H1 (cell line): ENCODE measurements at regions of chr6 and their contacts with region 1.

Region 1: GRCh38 chr6:53171605-53172446 is 23.2 kb upstream of the GCM1 start:
- DNase-seq: peak; percentile 57 to 98
- H3K4me3 ChIP-seq: no peak overlapping the region
- H3K27ac ChIP-seq: no peak overlapping the region
- H3K4me1 ChIP-seq: no peaks in the 10 kb centered on the region
- H3K27me3 ChIP-seq: no peaks in the 10 kb centered on the region
- CTCF ChIP-seq: peak; percentile 100
- EP300 ChIP-seq: no peak; a peak in 1 of 3 replicates
- POLR2A ChIP-seq: no peak
- RAD21 ChIP-seq: peak; percentile 100

Region 2: DNA sequence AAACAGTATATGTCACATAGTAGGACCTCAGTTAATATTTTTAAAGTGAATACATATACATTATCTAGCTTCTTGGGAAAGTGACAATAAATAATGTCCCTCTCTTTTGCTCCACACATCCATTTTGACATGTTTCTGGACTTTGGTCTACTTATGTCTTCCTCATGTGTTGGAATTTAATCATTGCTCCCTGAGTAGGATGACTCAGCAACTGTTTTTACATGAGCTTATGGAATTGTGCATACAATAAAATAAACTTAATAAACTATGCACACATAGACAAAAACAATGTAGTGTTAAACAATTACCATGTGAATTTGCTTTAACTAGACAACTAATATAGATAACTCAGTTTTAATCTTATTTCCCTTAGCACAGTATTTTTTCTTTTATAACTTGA is 1849.3 kb before region 1 on chr6:
- CTCF ChIA-PET with region 1: no interaction called
- POLR2A ChIA-PET with region 1: no interaction called
- DNase-seq: no peak
- H3K4me3 ChIP-seq: no peak overlapping the region
- H3K27ac ChIP-seq: no peak overlapping the region
- H3K4me1 ChIP-seq: 0 out of 7 replicates have a peak, but pooled peaks cover 0 to 2% (median 0%) of the 10 kb centered on the region in 4 experiments
- H3K27me3 ChIP-seq: no peaks in the 10 kb centered on the region
- CTCF ChIP-seq: no peak
- EP300 ChIP-seq: no peak
- POLR2A ChIP-seq: no peak
- RAD21 ChIP-seq: no peak

Region 3: GRCh38 chr6:53103992-53104675 is 67.7 kb before region 1 on chr6:
- CTCF ChIA-PET with region 1: interaction called, 14 read pairs
- POLR2A ChIA-PET with region 1: no interaction called
- DNase-seq: no peak
- H3K4me3 ChIP-seq: no peak overlapping the region
- H3K27ac ChIP-seq: no peak overlapping the region
- H3K4me1 ChIP-seq: peaks cover 0 to 2% (median 0%) of the 10 kb centered on the region in 4 experiments; a peak in 1 of 7 replicates
- H3K27me3 ChIP-seq: no peaks in the 10 kb centered on the region
- CTCF ChIP-seq: peak in 2 of 3 experiments; percentile 33 to 37; a peak in 2 of 4 replicates
- EP300 ChIP-seq: no peak
- POLR2A ChIP-seq: no peak
- RAD21 ChIP-seq: peak; percentile 68 to 73

Region 4: DNA sequence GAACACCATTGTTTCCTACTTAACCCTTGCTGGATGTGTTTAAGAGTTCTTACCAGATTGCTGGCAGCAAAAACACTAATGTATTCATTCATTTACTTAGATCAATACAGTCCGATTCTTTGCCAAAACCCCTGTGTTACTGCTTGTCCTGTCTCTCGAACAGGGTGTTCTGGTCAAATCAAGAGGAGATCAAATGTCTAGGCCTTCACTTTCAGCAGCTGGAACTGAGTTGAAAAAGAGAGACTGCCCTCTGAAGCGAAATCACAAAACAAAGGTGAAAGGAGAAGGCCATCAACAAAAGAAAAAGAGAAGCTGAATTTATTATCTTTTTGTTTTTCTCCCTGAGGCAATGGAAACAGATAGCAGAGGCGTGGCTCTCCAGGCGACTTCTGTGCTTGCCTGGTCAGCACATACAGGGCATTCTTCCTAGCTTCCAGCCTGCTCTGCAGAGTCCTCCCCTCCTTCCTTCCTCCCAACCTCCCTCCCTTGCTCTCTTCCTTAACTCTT is 20.9 kb after region 1 on chr6:
- CTCF ChIA-PET with region 1: interaction called, 25 read pairs
- POLR2A ChIA-PET with region 1: no interaction called
- DNase-seq: no peak
- H3K4me3 ChIP-seq: no peak overlapping the region
- H3K27ac ChIP-seq: no peak overlapping the region
- H3K4me1 ChIP-seq: peaks cover 0 to 3% (median 1%) of the 10 kb centered on the region in 4 experiments; a peak in 3 of 7 replicates
- H3K27me3 ChIP-seq: no peaks in the 10 kb centered on the region
- CTCF ChIP-seq: no peak
- EP300 ChIP-seq: no peak
- POLR2A ChIP-seq: no peak
- RAD21 ChIP-seq: no peak

Region 5: GRCh38 chr6:53273370-53273769 is 101.5 kb after region 1 on chr6:
- CTCF ChIA-PET with region 1: interaction called, 19 read pairs
- POLR2A ChIA-PET with region 1: no interaction called
- DNase-seq: no peak
- H3K4me3 ChIP-seq: no peak overlapping the region
- H3K27ac ChIP-seq: no peak overlapping the region
- H3K4me1 ChIP-seq: no peaks in the 10 kb centered on the region
- H3K27me3 ChIP-seq: no peaks in the 10 kb centered on the region
- CTCF ChIP-seq: peak; percentile 23 to 40 (median 26); a peak in 3 of 4 replicates
- EP300 ChIP-seq: no peak
- POLR2A ChIP-seq: no peak
- RAD21 ChIP-seq: peak; percentile 25 to 43; a peak in 3 of 4 replicates

Region 6: GRCh38 chr6:53410508-53411258 is 238.9 kb after region 1 on chr6:
- CTCF ChIA-PET with region 1: interaction called, 15 read pairs
- POLR2A ChIA-PET with region 1: no interaction called
- DNase-seq: no peak
- H3K4me3 ChIP-seq: no peak overlapping the region
- H3K27ac ChIP-seq: no peak overlapping the region
- H3K4me1 ChIP-seq: peaks cover 0 to 2% (median 0%) of the 10 kb centered on the region in 4 experiments; a peak in 1 of 7 replicates
- H3K27me3 ChIP-seq: no peaks in the 10 kb centered on the region
- CTCF ChIP-seq: peak; percentile 69 to 76 (median 71)
- EP300 ChIP-seq: no peak
- POLR2A ChIP-seq: no peak
- RAD21 ChIP-seq: peak; percentile 76 to 80

Region 7: GRCh38 chr6:53474010-53474409 is 302.2 kb after region 1 on chr6:
- CTCF ChIA-PET with region 1: interaction called, 13 read pairs
- POLR2A ChIA-PET with region 1: no interaction called
- DNase-seq: no peak
- H3K4me3 ChIP-seq: no peak overlapping the region
- H3K27ac ChIP-seq: no peak overlapping the region
- H3K4me1 ChIP-seq: no peaks in the 10 kb centered on the region
- H3K27me3 ChIP-seq: no peaks in the 10 kb centered on the region
- CTCF ChIP-seq: no peak
- EP300 ChIP-seq: no peak
- POLR2A ChIP-seq: no peak
- RAD21 ChIP-seq: no peak